Activated CD4-positive, alpha-beta T cell treated with anti-CD3 and anti-CD28 coated beads for 36 hours (primary cell): ENCODE measurements at regions of chr9 and their contacts with region 1.

Region 1: GRCh38 chr9:33076358-33077004 is at the start of gene SMU1:
- DNase-seq: peak; percentile 98
- ATAC-seq: peak; percentile 93
- H3K4me3 Mint-ChIP-seq: peak within 1 kb of the TSS; percentile 100
- H3K27ac Mint-ChIP-seq: peak within 1 kb of the TSS; percentile 100
- H3K4me1 Mint-ChIP-seq: peaks cover 39% of the 10 kb centered on the region
- H3K27me3 Mint-ChIP-seq: no peaks in the 10 kb centered on the region
- total RNA-seq, gene SMU1: 23.2 to 29.6 TPM

Region 2: DNA sequence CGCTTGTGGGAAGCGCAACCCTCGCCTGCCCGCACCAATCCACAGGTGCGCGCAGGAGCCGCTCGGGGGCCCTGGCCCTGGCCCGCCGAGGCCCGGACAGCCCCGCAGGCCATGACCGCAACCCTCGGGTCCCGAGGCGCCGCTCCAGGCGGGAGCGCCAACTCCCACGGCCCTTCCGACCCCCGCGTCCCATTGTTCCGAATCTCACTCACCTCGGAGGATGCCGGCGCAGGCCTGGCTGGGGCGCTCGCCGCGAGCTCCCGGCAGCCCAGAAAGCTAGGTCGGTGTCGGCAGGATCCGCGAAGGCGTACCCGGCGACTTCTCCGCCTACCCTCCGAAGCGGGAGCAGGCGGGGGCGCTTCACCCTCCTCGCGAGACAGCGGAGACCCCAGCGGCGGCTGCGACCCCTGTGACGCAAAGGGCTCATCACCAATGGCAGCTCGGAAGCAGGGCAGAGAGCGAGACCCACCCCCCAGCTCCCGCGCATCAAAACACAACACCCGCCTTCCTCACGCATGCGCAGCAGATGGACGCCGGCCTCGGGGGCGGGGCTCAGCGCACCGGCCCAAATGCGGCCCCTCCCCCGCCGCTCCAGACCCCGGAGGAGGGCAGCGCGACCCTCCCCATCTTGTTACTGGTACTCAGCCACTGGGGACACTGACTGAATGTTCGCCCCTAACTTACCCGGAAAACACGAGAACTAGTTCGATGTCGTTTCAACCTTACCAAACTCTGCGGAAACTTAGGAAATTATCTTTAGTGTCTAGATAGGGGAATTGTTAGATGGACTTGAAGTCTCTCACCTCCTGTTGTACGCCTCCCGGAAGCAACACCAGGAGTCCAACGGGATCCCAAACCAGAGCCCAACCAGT is 525.7 kb before region 1 on chr9:
- CTCF ChIA-PET with region 1: no interaction called
- POLR2A ChIA-PET with region 1: interaction called, 3 read pairs
- intact Hi-C with region 1: loop called in 1 of 2 experiments (anchors 5 kb)
- DNase-seq: peak; percentile 95
- ATAC-seq: peak; percentile 74
- H3K4me3 Mint-ChIP-seq: peak overlapping the region; percentile 96
- H3K27ac Mint-ChIP-seq: peak overlapping the region; percentile 99
- H3K4me1 Mint-ChIP-seq: peaks cover 47% of the 10 kb centered on the region
- H3K27me3 Mint-ChIP-seq: no peaks in the 10 kb centered on the region

Region 3: DNA sequence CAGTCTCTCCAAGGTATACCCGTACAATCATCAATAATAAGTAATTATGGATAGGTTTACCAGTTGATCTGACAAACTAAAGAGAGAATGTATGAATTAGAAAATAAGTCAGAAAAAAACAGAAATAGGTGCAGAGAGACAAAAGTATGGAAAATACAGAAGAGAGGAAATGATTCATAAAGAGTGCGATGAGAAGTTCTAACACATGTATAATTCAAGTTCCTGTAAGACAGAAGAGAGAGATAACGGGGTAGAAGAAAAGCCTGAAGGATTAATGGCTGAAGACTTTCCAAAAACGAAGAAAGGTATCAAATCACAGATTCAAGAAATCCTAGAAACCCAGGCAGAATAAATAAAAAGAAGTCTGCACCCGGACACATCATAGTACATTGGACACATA is 16.2 kb after region 1 on chr9:
- CTCF ChIA-PET with region 1: interaction called, 3 read pairs
- POLR2A ChIA-PET with region 1: interaction called, 4 read pairs
- intact Hi-C with region 1: loop called in 1 of 2 experiments (anchors 1 kb)
- DNase-seq: no peak
- ATAC-seq: peak; percentile 74
- H3K4me3 Mint-ChIP-seq: no peak overlapping the region
- H3K27ac Mint-ChIP-seq: peak overlapping the region; percentile 56
- H3K4me1 Mint-ChIP-seq: peaks cover 10% of the 10 kb centered on the region
- H3K27me3 Mint-ChIP-seq: no peaks in the 10 kb centered on the region

Region 4: DNA sequence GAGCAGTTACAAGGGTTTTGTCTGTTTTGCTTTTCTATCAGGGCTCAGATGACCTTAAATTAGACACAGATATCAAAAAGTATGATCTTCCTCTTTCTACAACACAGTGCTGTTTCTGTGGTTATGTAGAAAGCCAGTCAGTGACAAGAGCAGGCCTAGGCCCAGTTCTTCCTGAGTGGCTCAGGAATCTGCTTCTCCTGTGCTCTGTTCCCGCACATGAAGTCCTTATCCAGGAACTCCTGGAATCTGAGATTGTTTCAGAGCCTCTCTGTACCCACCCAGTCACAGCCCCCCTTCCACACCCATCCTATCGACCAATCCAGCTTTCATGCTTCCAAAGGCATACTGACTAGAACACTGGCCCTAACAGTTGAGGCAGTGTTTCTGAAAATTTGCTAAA is 40.4 kb after region 1 on chr9:
- CTCF ChIA-PET with region 1: no interaction called
- POLR2A ChIA-PET with region 1: no interaction called
- intact Hi-C with region 1: no loop called
- DNase-seq: no peak
- ATAC-seq: no peak
- H3K4me3 Mint-ChIP-seq: no peak overlapping the region
- H3K27ac Mint-ChIP-seq: peak overlapping the region; percentile 14
- H3K4me1 Mint-ChIP-seq: peaks cover 17% of the 10 kb centered on the region
- H3K27me3 Mint-ChIP-seq: no peaks in the 10 kb centered on the region

Region 5: DNA sequence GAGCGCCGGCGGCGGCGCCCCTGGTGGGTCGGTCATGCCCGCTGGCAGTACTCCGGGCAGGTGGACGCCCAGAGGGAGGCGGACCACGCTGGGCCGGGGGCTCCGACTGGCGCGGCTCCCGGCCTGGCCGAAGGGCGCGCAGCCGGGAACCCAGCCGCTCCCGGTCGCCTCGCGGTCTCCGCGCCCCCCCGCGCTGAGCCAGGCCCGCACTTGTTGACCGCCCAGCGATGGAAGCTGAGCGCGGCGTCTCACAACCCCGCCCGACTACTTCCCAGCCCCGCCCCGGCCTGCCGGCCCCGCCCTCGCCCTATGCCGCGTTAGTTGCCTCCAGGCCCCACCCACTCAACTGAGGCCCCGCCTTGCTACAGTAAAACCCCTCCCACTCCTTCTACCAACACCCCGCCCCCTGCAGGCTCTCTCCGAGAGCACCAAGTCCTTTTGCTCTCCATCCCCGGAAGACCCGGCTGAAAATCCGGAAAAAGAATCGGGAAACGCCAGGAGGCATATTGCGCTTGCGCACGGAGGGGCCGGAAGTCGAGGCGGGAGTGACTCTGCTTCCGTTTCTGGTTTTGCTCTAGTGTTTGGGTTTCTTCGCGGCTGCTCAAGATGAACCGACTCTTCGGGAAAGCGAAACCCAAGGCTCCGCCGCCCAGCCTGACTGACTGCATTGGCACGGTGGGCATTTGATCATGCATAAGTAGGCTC is 188.1 kb after region 1 on chr9 and contains the starts of genes BAG1 and CHMP5:
- CTCF ChIA-PET with region 1: interaction called, 3 read pairs
- POLR2A ChIA-PET with region 1: interaction called, 3 read pairs
- intact Hi-C with region 1: loop called (anchors 1 kb)
- DNase-seq: peak; percentile 100
- ATAC-seq: peak; percentile 96
- H3K4me3 Mint-ChIP-seq: peak within 1 kb of the TSS; percentile 97
- H3K27ac Mint-ChIP-seq: peak within 1 kb of the TSS; percentile 99
- H3K4me1 Mint-ChIP-seq: peaks cover 51% of the 10 kb centered on the region
- H3K27me3 Mint-ChIP-seq: no peaks in the 10 kb centered on the region
- total RNA-seq, gene BAG1: 47.9 to 65.8 TPM
- total RNA-seq, gene CHMP5: 102 to 106 TPM

Region 6: GRCh38 chr9:33393581-33393980 is 317.1 kb after region 1 on chr9:
- CTCF ChIA-PET with region 1: no interaction called
- POLR2A ChIA-PET with region 1: no interaction called
- intact Hi-C with region 1: no loop called
- DNase-seq: no peak
- ATAC-seq: no peak
- H3K4me3 Mint-ChIP-seq: no peak overlapping the region
- H3K27ac Mint-ChIP-seq: no peak overlapping the region
- H3K4me1 Mint-ChIP-seq: peaks cover 4% of the 10 kb centered on the region
- H3K27me3 Mint-ChIP-seq: no peaks in the 10 kb centered on the region